Naive thymus-derived CD4-positive, alpha-beta T cell (primary cell): ENCODE measurements at regions of chr1 and their contacts with region 1.

Region 1: DNA sequence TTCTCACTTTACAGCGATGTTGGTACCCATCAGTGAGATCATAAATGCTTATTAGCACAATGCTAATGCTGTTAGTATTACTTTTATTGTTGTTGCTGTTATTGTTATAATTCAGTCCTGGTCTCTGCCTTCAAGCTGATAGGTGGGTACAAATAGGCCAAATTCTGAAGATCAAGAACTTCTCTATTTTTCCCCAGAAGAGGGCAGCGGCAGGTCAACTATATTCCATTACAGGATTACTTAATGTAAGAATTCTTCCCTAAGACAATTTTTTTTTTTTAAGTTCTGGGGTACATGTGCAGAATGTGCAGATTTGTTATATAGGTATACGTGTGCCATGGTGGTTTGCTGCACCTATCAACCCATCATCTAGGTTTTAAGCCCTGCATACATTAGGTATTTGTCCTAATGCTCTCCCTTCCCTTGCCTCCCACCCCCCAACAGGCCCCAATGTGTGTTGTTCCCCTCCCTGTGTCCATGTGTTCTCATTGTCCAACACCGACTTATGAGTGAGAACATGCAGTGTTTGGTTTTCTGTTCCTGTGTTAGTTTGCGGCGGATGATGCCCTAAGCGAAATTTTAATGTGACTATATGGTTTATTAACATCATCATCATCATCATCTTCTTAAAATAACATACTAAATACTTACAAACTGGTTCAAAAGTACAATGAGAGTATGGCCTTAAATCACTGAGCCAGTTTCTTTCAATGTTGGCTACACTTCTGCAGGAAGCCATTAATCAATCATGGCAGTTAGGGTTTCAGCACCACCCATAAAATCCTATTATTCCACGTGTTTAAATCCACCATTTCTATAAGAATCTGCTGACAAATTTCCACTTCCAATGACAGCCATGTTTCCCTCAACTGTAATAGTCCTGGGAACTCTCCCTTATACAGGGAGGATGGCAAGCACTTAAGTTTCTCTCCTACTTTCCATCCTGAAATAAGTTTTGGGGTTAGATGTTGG is 19.2 kb downstream of the SLC19A2 start:
- DNase-seq: peak in 3 of 9 donors; percentile 10 to 18 (median 18)
- ATAC-seq: no peak
- H3K4me3 ChIP-seq: no peak overlapping the region
- H3K4me3 Mint-ChIP-seq: no peak overlapping the region
- H3K27ac ChIP-seq: no peak overlapping the region
- H3K27ac Mint-ChIP-seq: peak overlapping the region in 1 of 9 donors; percentile 27
- H3K4me1 ChIP-seq: no peaks in the 10 kb centered on the region
- H3K4me1 Mint-ChIP-seq: peaks cover 0 to 6% (median 5%) of the 10 kb centered on the region in 7 donors
- H3K27me3 ChIP-seq: no peaks in the 10 kb centered on the region
- H3K27me3 Mint-ChIP-seq: peaks cover 0 to under 1% (median 0%) of the 10 kb centered on the region in 5 donors

Region 2: DNA sequence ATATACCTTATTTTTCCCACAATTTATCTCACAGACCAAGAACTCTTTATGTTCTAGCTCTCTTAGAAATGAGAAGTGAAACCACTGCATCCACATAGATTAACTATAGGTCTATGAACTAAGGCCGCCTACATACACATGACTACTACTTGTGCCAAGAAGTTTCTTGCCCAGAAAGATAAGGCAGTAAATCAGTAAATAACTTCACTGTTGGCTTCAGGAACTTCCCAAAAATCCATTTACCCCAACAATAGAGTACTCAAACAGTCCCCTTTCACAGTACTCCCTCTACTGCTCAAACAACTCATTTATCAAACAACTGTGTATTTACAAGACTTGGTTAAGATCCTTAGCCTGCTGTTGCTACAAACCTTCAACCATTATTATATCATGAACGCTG is 195.4 kb before region 1 on chr1:
- CTCF ChIA-PET with region 1: no interaction called
- POLR2A ChIA-PET with region 1: no interaction called
- intact Hi-C with region 1: no loop called
- DNase-seq: no peak
- ATAC-seq: peak; percentile 44
- H3K4me3 ChIP-seq: no peak overlapping the region
- H3K4me3 Mint-ChIP-seq: no peak overlapping the region
- H3K27ac ChIP-seq: no peak overlapping the region
- H3K27ac Mint-ChIP-seq: no peak overlapping the region
- H3K4me1 ChIP-seq: no peaks in the 10 kb centered on the region
- H3K4me1 Mint-ChIP-seq: peaks cover 0 to 5% (median 0%) of the 10 kb centered on the region in 7 donors
- H3K27me3 ChIP-seq: no peaks in the 10 kb centered on the region
- H3K27me3 Mint-ChIP-seq: no peaks in the 10 kb centered on the region

Region 3: GRCh38 chr1:169499807-169500206 is 33.3 kb after region 1 on chr1:
- CTCF ChIA-PET with region 1: no interaction called
- POLR2A ChIA-PET with region 1: no interaction called
- intact Hi-C with region 1: loop called in 1 of 2 experiments (anchors 1 kb)
- DNase-seq: no peak
- ATAC-seq: no peak
- H3K4me3 ChIP-seq: no peak overlapping the region
- H3K4me3 Mint-ChIP-seq: no peak overlapping the region
- H3K27ac ChIP-seq: no peak overlapping the region
- H3K27ac Mint-ChIP-seq: no peak overlapping the region
- H3K4me1 ChIP-seq: no peaks in the 10 kb centered on the region
- H3K4me1 Mint-ChIP-seq: peaks cover 0 to 15% (median 0%) of the 10 kb centered on the region in 7 donors
- H3K27me3 ChIP-seq: no peaks in the 10 kb centered on the region
- H3K27me3 Mint-ChIP-seq: peaks cover 0 to 13% (median 10%) of the 10 kb centered on the region in 5 donors

Region 4: DNA sequence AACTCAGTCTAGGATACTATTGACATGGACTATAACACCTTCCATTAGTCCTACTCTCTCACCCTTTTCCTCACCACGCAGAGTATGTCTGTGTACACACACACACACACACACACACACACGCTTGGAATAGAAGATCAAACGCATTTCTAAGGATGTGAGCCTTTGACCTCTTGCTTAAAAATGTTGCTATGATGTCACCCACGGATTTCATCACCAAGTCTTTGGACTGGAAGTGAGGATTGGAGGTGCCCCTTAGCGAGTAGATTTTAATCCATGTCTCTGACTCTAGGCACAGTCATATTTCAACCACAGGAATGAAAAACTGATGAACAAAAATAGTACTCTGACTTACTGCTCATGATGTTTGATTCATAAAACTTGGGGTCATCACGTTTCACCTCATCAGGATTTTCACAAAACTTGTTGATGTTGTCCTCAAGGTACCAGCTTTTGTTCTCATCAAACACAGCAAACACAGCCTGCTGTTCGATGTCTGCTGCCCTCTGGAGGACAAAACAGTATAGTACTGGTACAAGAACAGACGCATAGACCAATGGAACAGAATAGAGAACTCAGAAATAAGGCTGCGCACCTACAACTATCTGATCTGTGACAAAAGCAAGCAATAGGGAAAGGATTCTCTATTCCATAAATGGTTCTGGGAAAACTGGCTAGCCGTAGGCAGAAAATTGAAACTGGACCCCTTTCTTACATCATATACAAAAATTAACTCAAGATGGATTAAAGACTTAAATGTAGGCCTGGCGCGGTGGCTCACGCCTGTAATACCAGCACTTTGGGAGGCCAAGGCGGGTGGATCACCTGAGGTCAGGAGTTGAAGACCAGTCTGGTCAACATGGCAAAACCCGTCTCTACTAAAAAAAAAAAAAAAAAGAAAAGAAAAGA is 79.8 kb after region 1 on chr1:
- CTCF ChIA-PET with region 1: interaction called, 7 read pairs
- POLR2A ChIA-PET with region 1: no interaction called
- intact Hi-C with region 1: loop called (anchors 1 kb)
- DNase-seq: peak in 7 of 9 donors; percentile 40 to 73 (median 68)
- ATAC-seq: peak; percentile 92
- H3K4me3 ChIP-seq: no peak overlapping the region
- H3K4me3 Mint-ChIP-seq: no peak overlapping the region
- H3K27ac ChIP-seq: no peak overlapping the region
- H3K27ac Mint-ChIP-seq: peak overlapping the region in 1 of 9 donors; percentile 7
- H3K4me1 ChIP-seq: no peaks in the 10 kb centered on the region
- H3K4me1 Mint-ChIP-seq: peaks cover 0 to 14% (median 0%) of the 10 kb centered on the region in 7 donors
- H3K27me3 ChIP-seq: no peaks in the 10 kb centered on the region
- H3K27me3 Mint-ChIP-seq: no peaks in the 10 kb centered on the region